Activated CD4-positive, alpha-beta T cell treated with anti-CD3 and anti-CD28 coated beads for 36 hours (primary cell): ENCODE measurements at regions of chr19 and their contacts with region 1.

Region 1: GRCh38 chr19:17859533-17860330 is at the start of gene RPL18A:
- DNase-seq: peak; percentile 100
- ATAC-seq: peak; percentile 95
- H3K4me3 Mint-ChIP-seq: peak within 1 kb of the TSS; percentile 97
- H3K27ac Mint-ChIP-seq: peak within 1 kb of the TSS; percentile 98
- H3K4me1 Mint-ChIP-seq: peaks cover 35% of the 10 kb centered on the region
- H3K27me3 Mint-ChIP-seq: no peaks in the 10 kb centered on the region
- total RNA-seq, gene RPL18A: 3,109 to 3,329 TPM

Region 2: DNA sequence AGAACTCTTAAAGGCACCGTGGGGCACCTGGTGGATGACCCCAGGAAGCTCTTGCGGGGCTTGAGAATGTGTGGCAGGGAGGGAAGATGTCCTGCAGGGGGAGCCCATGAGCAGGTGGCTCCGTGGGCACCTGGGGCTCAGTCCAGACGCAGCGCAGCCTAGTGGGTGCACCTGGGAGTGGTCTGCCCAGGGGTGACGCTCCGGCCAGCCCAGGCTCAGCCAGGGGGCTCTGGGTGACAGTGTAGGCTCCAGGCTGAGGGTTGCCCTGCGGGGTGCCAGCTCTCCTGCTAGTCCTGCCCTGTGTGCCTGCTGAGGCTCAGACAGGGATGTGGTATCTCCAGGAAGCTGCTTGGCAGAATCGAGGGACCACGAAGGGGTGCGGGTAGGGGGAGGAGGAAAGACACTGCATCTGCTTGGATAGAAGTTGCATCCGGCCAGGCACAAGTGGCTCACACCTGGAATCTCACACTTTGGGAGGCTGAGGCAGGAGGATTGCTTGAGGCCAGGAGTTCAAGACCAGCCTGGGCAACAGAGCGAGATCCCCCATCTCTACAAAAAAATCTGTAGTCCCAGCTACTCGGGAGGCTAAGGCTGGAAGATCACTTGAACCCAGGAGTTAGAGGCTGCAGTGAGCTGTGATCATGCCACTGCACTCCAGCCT is 363.3 kb before region 1 on chr19:
- CTCF ChIA-PET with region 1: interaction called, 6 read pairs
- POLR2A ChIA-PET with region 1: interaction called, 5 read pairs
- intact Hi-C with region 1: loop called in 1 of 2 experiments (anchors 1 kb)
- DNase-seq: peak; percentile 93
- ATAC-seq: peak; percentile 99
- H3K4me3 Mint-ChIP-seq: no peak overlapping the region
- H3K27ac Mint-ChIP-seq: no peak overlapping the region
- H3K4me1 Mint-ChIP-seq: peaks cover 14% of the 10 kb centered on the region
- H3K27me3 Mint-ChIP-seq: no peaks in the 10 kb centered on the region

Region 3: DNA sequence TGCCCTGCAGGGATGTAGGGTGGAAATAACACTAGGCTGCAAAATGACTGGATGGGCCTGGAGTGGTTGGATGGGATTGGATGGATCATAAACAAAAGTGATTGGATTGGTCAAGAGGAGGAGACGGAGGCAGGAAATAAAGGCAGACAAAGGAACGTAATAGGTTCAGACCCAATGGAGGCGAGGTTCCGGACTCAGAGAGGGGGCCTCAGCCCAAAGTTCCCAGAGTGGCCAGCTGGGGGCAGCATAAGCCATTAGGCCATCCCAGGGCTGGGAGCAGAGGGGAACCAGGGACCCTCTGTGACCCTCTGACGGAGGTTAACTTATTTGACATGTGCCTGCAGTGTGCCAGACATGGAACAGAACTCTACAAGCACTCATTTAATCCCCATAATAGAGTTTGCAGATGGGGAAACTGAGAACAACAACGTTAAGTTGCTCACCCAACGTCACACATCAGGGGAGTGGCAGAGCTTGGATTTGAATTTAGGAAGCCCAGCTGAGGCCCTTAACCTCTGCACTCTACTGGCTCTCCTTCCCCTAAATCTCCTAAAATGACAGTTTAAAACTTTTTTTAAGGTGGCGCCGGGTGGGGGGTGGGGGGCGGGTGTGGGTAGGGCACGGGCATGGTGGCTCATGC is 155.8 kb before region 1 on chr19:
- CTCF ChIA-PET with region 1: interaction called, 7 read pairs
- POLR2A ChIA-PET with region 1: no interaction called
- intact Hi-C with region 1: loop called (anchors 1 kb)
- DNase-seq: peak; percentile 85
- ATAC-seq: peak; percentile 96
- H3K4me3 Mint-ChIP-seq: no peak overlapping the region
- H3K27ac Mint-ChIP-seq: no peak overlapping the region
- H3K4me1 Mint-ChIP-seq: no peaks in the 10 kb centered on the region
- H3K27me3 Mint-ChIP-seq: peaks cover 5% of the 10 kb centered on the region

Region 4: GRCh38 chr19:17784201-17785008 is 75.3 kb before region 1 on chr19:
- CTCF ChIA-PET with region 1: interaction called, 3 read pairs
- POLR2A ChIA-PET with region 1: no interaction called
- intact Hi-C with region 1: loop called (anchors 2 to 5 kb)
- DNase-seq: peak; percentile 87
- ATAC-seq: peak; percentile 73
- H3K4me3 Mint-ChIP-seq: no peak overlapping the region
- H3K27ac Mint-ChIP-seq: no peak overlapping the region
- H3K4me1 Mint-ChIP-seq: peaks cover 6% of the 10 kb centered on the region
- H3K27me3 Mint-ChIP-seq: no peaks in the 10 kb centered on the region

Region 5: DNA sequence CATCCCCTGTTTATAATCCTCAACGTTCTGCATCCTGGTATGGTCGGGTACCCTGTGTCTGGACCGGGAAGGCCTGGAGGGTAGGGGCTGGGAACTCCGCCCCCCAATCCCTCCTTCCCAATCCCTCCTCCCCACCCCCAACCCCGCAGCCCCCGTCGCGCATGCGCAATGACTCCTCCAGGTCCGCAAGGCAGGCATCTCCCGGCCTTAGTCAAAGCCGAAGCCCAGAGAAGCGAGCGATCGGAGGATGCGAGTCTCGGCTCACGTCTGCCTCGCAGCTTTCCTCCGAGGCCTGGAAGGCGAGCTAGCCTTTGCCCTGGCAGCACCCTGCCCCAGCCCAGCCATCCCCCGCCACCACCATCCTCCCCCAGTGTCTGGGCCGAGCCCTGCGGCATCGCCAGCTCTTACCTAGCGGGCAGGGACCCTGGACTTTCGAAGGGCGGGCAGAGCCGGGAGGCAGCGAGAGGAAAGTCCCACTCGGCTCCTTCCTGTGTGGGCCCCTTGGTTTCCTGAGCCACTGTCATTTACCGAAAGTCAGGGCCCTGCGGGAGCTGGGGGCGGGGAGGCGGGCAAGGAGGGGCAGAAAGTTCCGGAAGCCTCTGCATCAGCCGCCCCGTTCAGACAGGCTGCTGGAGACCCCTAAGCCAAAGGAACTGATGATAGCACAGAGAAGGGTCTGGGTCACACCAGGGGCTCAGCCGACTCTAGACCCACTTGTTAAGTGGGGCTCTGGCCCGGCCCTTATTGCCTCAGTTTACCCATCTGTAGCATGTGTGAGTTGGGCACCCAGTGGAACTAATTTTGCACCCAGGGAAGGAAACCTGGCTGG is 12.0 kb before region 1 on chr19 and contains the start of gene JAK3:
- CTCF ChIA-PET with region 1: interaction called, 55 read pairs
- POLR2A ChIA-PET with region 1: interaction called, 17 read pairs
- intact Hi-C with region 1: loop called (anchors 1 kb)
- DNase-seq: peak; percentile 96
- ATAC-seq: peak; percentile 82
- H3K4me3 Mint-ChIP-seq: peak within 1 kb of the TSS; percentile 92
- H3K27ac Mint-ChIP-seq: peak within 1 kb of the TSS; percentile 98
- H3K4me1 Mint-ChIP-seq: peaks cover 69% of the 10 kb centered on the region
- H3K27me3 Mint-ChIP-seq: no peaks in the 10 kb centered on the region
- total RNA-seq, gene JAK3: 174 to 180 TPM

Region 6: GRCh38 chr19:17947815-17948513 is 88.2 kb after region 1 on chr19:
- CTCF ChIA-PET with region 1: interaction called, 3 read pairs
- POLR2A ChIA-PET with region 1: interaction called, 10 read pairs
- intact Hi-C with region 1: loop called in 1 of 2 experiments (anchors 1 kb)
- DNase-seq: peak; percentile 98
- ATAC-seq: peak; percentile 61
- H3K4me3 Mint-ChIP-seq: peak overlapping the region; percentile 70
- H3K27ac Mint-ChIP-seq: no peak overlapping the region
- H3K4me1 Mint-ChIP-seq: peaks cover 50% of the 10 kb centered on the region
- H3K27me3 Mint-ChIP-seq: peaks cover 33% of the 10 kb centered on the region

Region 7: GRCh38 chr19:18373892-18374629 is 514.3 kb after region 1 on chr19:
- CTCF ChIA-PET with region 1: no interaction called
- POLR2A ChIA-PET with region 1: no interaction called
- intact Hi-C with region 1: no loop called
- DNase-seq: peak; percentile 73
- ATAC-seq: peak; percentile 84
- H3K4me3 Mint-ChIP-seq: no peak overlapping the region
- H3K27ac Mint-ChIP-seq: peak overlapping the region; percentile 48
- H3K4me1 Mint-ChIP-seq: peaks cover 8% of the 10 kb centered on the region
- H3K27me3 Mint-ChIP-seq: peaks cover 6% of the 10 kb centered on the region